ENCODE measurements at regions of chr12 and their contacts with region 1.

Region 1: GRCh38 chr12:46608431-46609272 is 217.1 kb downstream of the SLC38A4 start:
- DNase-seq: no peak
- ATAC-seq: no peak
- H3K4me3 ChIP-seq: no peak overlapping the region
- H3K4me3 Mint-ChIP-seq: peak overlapping the region; percentile 66 to 86 (median 74)
- H3K27ac ChIP-seq: no peak overlapping the region
- H3K27ac Mint-ChIP-seq: peak overlapping the region; percentile 60 to 93 (median 83)
- H3K4me1 ChIP-seq: peaks cover 21 to 27% of the 10 kb centered on the region in 2 donors
- H3K4me1 Mint-ChIP-seq: peaks cover 27 to 61% (median 59%) of the 10 kb centered on the region in 7 donors
- H3K27me3 ChIP-seq: no peaks in the 10 kb centered on the region
- H3K27me3 Mint-ChIP-seq: no peaks in the 10 kb centered on the region

Region 2: DNA sequence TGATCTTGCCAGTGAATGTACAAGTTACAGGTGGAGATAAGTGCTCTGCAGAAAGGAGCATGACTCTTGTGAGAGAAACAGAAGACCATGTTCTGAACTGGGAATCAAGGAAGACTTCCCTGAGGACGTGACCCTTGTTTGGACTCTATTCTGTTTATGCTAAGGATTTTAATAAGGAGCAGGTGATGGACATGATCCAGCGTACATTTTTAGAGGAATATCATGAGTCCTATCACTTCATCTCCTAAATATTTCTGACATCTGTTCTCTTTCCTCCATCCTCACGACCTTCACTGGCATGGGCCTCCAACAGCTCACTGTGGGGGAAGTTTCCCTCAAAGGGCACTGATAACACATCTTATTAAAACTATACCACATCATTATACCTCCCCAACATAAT is 331.9 kb before region 1 on chr12:
- CTCF ChIA-PET with region 1: no interaction called
- POLR2A ChIA-PET with region 1: no interaction called
- intact Hi-C with region 1: no loop called
- DNase-seq: no peak
- ATAC-seq: no peak
- H3K4me3 ChIP-seq: no peak overlapping the region
- H3K4me3 Mint-ChIP-seq: no peak overlapping the region
- H3K27ac ChIP-seq: no peak overlapping the region
- H3K27ac Mint-ChIP-seq: peak overlapping the region in 1 of 9 donors; percentile 20
- H3K4me1 ChIP-seq: no peaks in the 10 kb centered on the region
- H3K4me1 Mint-ChIP-seq: peaks cover 3 to 29% (median 16%) of the 10 kb centered on the region in 7 donors
- H3K27me3 ChIP-seq: no peaks in the 10 kb centered on the region
- H3K27me3 Mint-ChIP-seq: no peaks in the 10 kb centered on the region

Region 3: DNA sequence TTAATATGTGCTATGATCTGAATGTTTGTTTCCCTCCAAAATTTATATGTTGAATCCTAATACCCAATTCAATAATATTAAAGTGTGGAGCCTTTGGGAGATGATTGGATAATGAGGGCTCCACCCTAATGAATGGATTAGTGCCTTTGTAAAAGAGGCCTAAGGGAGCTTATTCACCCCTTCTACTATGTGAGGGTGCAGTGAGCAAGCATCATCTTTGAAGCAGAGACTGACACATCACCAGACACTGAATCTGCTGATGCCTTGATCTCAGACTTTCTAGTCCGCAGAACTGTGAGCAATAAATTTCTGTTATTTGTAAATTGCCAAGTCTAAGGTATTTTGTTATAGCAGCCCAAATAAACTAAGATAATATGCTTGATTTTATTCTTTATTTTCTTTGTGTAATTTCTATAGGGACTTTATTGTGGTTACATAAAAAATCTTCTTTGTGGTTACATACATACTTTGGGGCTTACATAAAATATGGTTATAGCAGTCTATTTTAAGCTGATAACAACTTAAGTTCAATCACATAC is 104.9 kb before region 1 on chr12:
- CTCF ChIA-PET with region 1: no interaction called
- POLR2A ChIA-PET with region 1: no interaction called
- intact Hi-C with region 1: no loop called
- DNase-seq: no peak
- ATAC-seq: no peak
- H3K4me3 ChIP-seq: no peak overlapping the region
- H3K4me3 Mint-ChIP-seq: no peak overlapping the region
- H3K27ac ChIP-seq: no peak overlapping the region
- H3K27ac Mint-ChIP-seq: no peak overlapping the region
- H3K4me1 ChIP-seq: no peaks in the 10 kb centered on the region
- H3K4me1 Mint-ChIP-seq: peaks cover 0 to 17% (median 4%) of the 10 kb centered on the region in 7 donors
- H3K27me3 ChIP-seq: no peaks in the 10 kb centered on the region
- H3K27me3 Mint-ChIP-seq: no peaks in the 10 kb centered on the region

Region 4: DNA sequence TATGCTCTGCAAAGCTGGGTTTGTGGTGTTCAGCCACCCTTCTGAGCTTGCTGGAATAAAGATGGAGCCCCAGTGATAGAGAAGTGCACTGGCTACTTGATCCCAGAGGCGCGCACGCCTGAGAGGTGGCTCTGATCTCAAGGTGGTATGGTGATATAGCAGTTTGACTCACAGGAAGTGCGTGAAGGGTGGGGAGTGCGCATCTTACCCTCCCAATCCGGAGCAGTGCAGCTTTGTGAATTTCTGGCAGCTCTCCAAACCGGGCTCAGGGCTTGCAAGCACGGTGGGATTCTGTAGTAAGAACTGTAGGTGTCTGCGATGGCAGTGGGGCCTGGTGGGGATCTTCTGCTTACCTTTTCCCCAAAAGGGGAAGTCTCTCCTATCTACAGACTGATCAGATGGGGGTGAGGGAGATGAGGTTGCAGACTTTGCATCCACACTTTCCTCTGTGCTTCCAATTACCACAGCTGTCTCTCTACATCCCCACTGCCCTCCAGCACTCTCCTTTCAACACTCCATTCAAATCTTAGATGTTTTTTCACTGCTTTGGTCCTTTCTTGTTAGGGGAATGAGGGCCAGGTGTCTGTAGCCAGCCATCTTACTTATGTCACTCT is 38.7 kb before region 1 on chr12:
- CTCF ChIA-PET with region 1: no interaction called
- POLR2A ChIA-PET with region 1: no interaction called
- intact Hi-C with region 1: loop called in 1 of 2 experiments (anchors 5 kb)
- DNase-seq: no peak
- ATAC-seq: no peak
- H3K4me3 ChIP-seq: no peak overlapping the region
- H3K4me3 Mint-ChIP-seq: no peak overlapping the region
- H3K27ac ChIP-seq: no peak overlapping the region
- H3K27ac Mint-ChIP-seq: no peak overlapping the region
- H3K4me1 ChIP-seq: no peaks in the 10 kb centered on the region
- H3K4me1 Mint-ChIP-seq: peaks cover 0 to 12% (median 0%) of the 10 kb centered on the region in 7 donors
- H3K27me3 ChIP-seq: no peaks in the 10 kb centered on the region
- H3K27me3 Mint-ChIP-seq: no peaks in the 10 kb centered on the region

Region 5: DNA sequence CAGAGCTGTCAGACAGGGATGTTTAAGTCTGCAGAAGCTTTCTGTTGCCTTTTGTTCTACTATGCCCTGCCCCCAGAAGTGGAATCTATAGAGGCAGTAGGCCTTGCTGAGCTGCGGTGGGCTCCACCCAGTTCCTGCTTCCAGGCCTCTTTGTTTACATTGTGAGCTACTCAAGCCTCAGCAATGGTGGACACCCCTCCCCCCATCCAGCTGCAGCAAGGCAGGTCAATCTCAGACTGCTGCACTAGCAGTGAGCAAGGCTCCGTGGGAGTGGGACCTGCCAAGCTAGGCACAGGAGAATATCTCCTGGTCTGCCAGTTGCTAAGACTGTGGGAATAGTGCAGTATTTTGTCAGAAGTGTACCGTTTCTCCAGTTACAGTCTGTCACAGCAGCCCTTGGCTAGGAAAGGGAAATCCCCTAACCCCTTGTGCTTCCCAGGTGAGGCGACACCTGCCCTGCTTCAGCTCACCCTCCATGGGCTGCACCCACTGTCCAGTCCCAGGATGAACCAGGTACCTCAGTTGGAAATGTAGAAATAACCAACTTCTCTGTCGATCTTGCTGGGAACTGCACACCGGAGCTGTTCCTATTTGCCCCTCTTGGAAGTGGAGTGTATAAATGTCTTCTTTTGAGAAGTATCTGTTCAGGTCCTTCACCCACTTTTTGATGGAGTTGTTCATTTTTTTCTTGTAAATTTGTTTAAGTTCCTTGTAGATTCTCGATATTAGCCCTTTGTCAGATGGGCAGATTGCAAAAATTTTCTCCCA is 22.6 kb before region 1 on chr12:
- CTCF ChIA-PET with region 1: interaction called, 4 read pairs
- POLR2A ChIA-PET with region 1: interaction called, 21 read pairs
- intact Hi-C with region 1: loop called in 1 of 2 experiments (anchors 1 kb)
- DNase-seq: peak in 7 of 9 donors; percentile 33 to 81 (median 71)
- ATAC-seq: peak; percentile 27
- H3K4me3 ChIP-seq: peak overlapping the region; percentile 46
- H3K4me3 Mint-ChIP-seq: peak overlapping the region; percentile 13 to 82 (median 68)
- H3K27ac ChIP-seq: no peak overlapping the region
- H3K27ac Mint-ChIP-seq: peak overlapping the region; percentile 6 to 95 (median 91)
- H3K4me1 ChIP-seq: peaks cover 5 to 21% of the 10 kb centered on the region in 2 donors
- H3K4me1 Mint-ChIP-seq: peaks cover 29 to 79% (median 74%) of the 10 kb centered on the region in 7 donors
- H3K27me3 ChIP-seq: no peaks in the 10 kb centered on the region
- H3K27me3 Mint-ChIP-seq: no peaks in the 10 kb centered on the region

Region 6: GRCh38 chr12:46627686-46628085 is 19.0 kb after region 1 on chr12:
- CTCF ChIA-PET with region 1: no interaction called
- POLR2A ChIA-PET with region 1: no interaction called
- intact Hi-C with region 1: loop called in 1 of 2 experiments (anchors 2 kb)
- DNase-seq: no peak
- ATAC-seq: no peak
- H3K4me3 ChIP-seq: no peak overlapping the region
- H3K4me3 Mint-ChIP-seq: no peak overlapping the region
- H3K27ac ChIP-seq: no peak overlapping the region
- H3K27ac Mint-ChIP-seq: no peak overlapping the region
- H3K4me1 ChIP-seq: no peaks in the 10 kb centered on the region
- H3K4me1 Mint-ChIP-seq: peaks cover 0 to 22% (median 12%) of the 10 kb centered on the region in 7 donors
- H3K27me3 ChIP-seq: no peaks in the 10 kb centered on the region
- H3K27me3 Mint-ChIP-seq: no peaks in the 10 kb centered on the region